MCF 10A (cell line): ENCODE measurements at regions of chr5 and their contacts with region 1.

Region 1: DNA sequence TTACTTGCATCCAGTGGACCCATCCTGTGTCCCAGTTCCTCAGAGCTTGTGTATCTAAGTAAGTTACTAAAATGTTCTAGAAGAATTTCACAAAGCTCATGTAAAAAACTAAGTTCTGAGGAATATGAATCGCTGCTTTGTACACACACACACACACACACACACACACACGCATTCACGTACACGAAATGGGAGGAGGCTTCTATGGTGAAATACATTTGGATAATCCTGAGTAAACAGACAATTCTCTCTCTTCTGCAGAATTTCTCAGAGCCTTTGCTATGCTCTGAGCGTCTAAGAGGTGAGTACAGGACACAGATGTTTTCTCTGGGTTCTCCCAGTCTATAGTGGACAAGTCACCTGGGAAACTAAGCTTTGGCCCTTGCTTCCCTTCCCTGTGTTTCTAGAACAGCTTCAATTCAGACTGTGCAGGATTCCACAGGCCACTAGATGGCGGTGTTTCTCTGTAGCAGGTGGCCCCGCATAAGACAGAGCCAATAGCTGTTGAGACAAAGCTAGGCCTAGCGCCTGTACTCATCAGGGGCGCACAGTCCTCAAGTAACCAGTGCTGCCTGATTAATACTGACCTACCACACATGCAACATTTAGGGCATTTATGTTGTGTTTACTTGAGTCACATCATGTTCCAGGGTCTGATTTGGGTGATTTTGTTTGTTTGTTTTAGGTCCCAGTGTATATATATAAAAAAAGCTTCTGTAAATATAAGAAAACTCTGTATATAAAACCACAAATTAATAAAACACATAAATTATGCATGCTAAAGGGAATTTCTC is 114.8 kb downstream of the LIFR start:
- DNase-seq: peak; percentile 92
- H3K4me3 Mint-ChIP-seq: no peak overlapping the region
- H3K27ac Mint-ChIP-seq: no peak overlapping the region
- H3K4me1 Mint-ChIP-seq: peaks cover 10% of the 10 kb centered on the region
- H3K27me3 Mint-ChIP-seq: no peaks in the 10 kb centered on the region
- CTCF ChIP-seq: peak; percentile 97

Region 2: GRCh38 chr5:38329132-38329715 is 112.4 kb before region 1 on chr5:
- CTCF ChIA-PET with region 1: no interaction called
- POLR2A ChIA-PET with region 1: no interaction called
- intact Hi-C with region 1: no loop called
- DNase-seq: peak; percentile 88
- H3K4me3 Mint-ChIP-seq: no peak overlapping the region
- H3K27ac Mint-ChIP-seq: no peak overlapping the region
- H3K4me1 Mint-ChIP-seq: peaks cover 16% of the 10 kb centered on the region
- H3K27me3 Mint-ChIP-seq: no peaks in the 10 kb centered on the region
- CTCF ChIP-seq: no peak

Region 3: GRCh38 chr5:38382898-38383297 is 58.8 kb before region 1 on chr5:
- CTCF ChIA-PET with region 1: interaction called, 9 read pairs
- POLR2A ChIA-PET with region 1: interaction called, 3 read pairs
- intact Hi-C with region 1: loop called (anchors 2 kb)
- DNase-seq: peak; percentile 85
- H3K4me3 Mint-ChIP-seq: no peak overlapping the region
- H3K27ac Mint-ChIP-seq: no peak overlapping the region
- H3K4me1 Mint-ChIP-seq: no peaks in the 10 kb centered on the region
- H3K27me3 Mint-ChIP-seq: peaks cover 17% of the 10 kb centered on the region
- CTCF ChIP-seq: peak; percentile 84

Region 4: DNA sequence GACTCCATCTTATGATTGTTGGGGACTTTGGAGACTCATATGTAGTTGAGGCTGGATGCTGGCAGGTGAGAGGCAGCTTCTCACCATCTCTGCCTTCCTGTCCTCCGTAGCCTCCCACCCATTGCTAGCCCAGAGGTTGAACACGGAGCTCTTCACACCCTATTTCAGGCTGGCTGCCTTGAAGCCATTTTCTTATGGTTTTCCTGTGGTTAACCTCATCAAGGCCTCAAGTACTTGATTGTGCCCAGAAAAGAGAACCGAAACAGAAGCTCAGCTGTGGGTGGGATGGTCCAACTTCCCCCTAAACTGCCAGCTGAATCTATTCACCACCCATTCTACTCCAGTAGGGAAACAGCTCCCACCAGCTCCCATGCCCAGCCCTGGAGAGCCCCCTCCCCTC is 11.9 kb after region 1 on chr5:
- CTCF ChIA-PET with region 1: interaction called, 18 read pairs
- POLR2A ChIA-PET with region 1: interaction called, 7 read pairs
- intact Hi-C with region 1: no loop called
- DNase-seq: no peak
- H3K4me3 Mint-ChIP-seq: no peak overlapping the region
- H3K27ac Mint-ChIP-seq: no peak overlapping the region
- H3K4me1 Mint-ChIP-seq: no peaks in the 10 kb centered on the region
- H3K27me3 Mint-ChIP-seq: no peaks in the 10 kb centered on the region
- CTCF ChIP-seq: no peak

Region 5: GRCh38 chr5:38540314-38540713 is 98.7 kb after region 1 on chr5:
- CTCF ChIA-PET with region 1: interaction called, 6 read pairs
- POLR2A ChIA-PET with region 1: interaction called, 3 read pairs
- intact Hi-C with region 1: loop called (anchors 5 kb)
- DNase-seq: no peak
- H3K4me3 Mint-ChIP-seq: no peak overlapping the region
- H3K27ac Mint-ChIP-seq: no peak overlapping the region
- H3K4me1 Mint-ChIP-seq: peaks cover 11% of the 10 kb centered on the region
- H3K27me3 Mint-ChIP-seq: no peaks in the 10 kb centered on the region
- CTCF ChIP-seq: no peak

Region 6: GRCh38 chr5:38666668-38667498 is 225.2 kb after region 1 on chr5:
- CTCF ChIA-PET with region 1: interaction called, 15 read pairs
- POLR2A ChIA-PET with region 1: interaction called, 3 read pairs
- intact Hi-C with region 1: loop called (anchors 1 kb)
- DNase-seq: peak; percentile 64
- H3K4me3 Mint-ChIP-seq: no peak overlapping the region
- H3K27ac Mint-ChIP-seq: peak overlapping the region; percentile 43
- H3K4me1 Mint-ChIP-seq: peaks cover 29% of the 10 kb centered on the region
- H3K27me3 Mint-ChIP-seq: no peaks in the 10 kb centered on the region
- CTCF ChIP-seq: peak; percentile 49

Region 7: GRCh38 chr5:38922199-38922598 is 480.5 kb after region 1 on chr5:
- CTCF ChIA-PET with region 1: interaction called, 47 read pairs
- POLR2A ChIA-PET with region 1: interaction called, 3 read pairs
- intact Hi-C with region 1: loop called (anchors 1 kb)
- DNase-seq: peak; percentile 65
- H3K4me3 Mint-ChIP-seq: no peak overlapping the region
- H3K27ac Mint-ChIP-seq: no peak overlapping the region
- H3K4me1 Mint-ChIP-seq: no peaks in the 10 kb centered on the region
- H3K27me3 Mint-ChIP-seq: no peaks in the 10 kb centered on the region
- CTCF ChIP-seq: peak; percentile 84